Mammary epithelial cell (primary cell): ENCODE measurements at regions of chr20 and their contacts with region 1.

Region 1: DNA sequence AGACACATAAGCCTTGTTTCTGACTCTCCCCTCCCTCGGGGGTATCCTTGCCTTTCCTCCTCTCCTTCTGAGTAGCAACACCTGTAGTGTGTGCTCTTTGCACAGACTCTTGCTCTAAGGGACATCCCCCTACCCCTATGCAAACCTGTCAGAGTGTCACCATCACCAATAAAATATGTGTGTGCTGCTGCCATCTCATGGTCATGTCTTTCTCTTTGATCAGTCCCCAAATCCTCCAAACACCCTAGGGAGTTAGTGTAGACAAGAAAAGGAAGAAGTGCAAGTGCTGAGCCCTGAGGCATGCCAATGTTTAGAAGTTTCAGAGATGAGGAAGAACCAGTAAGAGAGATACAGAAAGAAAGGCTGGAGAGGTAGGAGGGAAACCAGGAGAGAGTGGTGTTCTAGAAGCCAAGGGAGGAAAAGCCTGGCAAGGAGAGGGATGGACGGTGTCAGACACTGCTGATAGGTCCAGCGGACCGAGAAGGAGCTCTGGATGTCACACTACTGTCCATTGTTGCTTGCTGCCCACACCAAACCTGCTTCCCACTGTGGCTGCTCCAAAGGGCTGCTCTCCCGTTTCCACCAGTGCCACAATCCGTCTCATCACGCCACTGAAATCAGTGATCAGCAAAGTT is 16.4 kb downstream of the TRMT6 start:
- DNase-seq: no peak
- H3K4me3 ChIP-seq: no peak overlapping the region
- H3K27ac ChIP-seq: no peak overlapping the region
- H3K4me1 ChIP-seq: no peaks in the 10 kb centered on the region
- H3K27me3 ChIP-seq: no peaks in the 10 kb centered on the region
- CTCF ChIP-seq: peak; percentile 28 to 56

Region 2: GRCh38 chr20:5806457-5807263 is 127.3 kb before region 1 on chr20:
- CTCF ChIA-PET with region 1: no interaction called
- dilution Hi-C with region 1: no loop called
- in situ Hi-C with region 1: loop called in 1 of 2 experiments (anchors 25 kb)
- intact Hi-C with region 1: loop called (anchors 1 kb)
- DNase-seq: no peak
- H3K4me3 ChIP-seq: no peak overlapping the region
- H3K27ac ChIP-seq: no peak overlapping the region
- H3K4me1 ChIP-seq: no peaks in the 10 kb centered on the region
- H3K27me3 ChIP-seq: no peaks in the 10 kb centered on the region
- CTCF ChIP-seq: peak; percentile 18 to 44

Region 3: DNA sequence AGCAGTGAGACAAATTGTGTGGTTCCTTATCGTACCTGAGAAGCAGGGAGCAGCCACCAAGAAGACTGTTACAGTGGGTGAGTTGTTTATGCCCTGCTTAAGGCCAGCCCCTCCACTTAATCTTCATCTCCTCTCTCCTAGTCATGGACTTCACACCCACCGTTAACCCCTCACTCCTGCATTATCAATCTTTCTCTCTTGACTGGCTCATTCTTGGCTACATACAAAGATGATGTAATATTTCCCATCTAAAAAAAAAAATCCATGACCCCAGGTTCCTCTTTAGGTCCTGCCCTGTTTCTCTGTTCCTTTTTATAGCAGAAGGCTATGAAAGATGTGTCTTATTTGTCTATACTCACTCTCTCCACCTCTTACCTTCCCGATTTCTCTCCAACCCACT is 111.3 kb before region 1 on chr20:
- CTCF ChIA-PET with region 1: no interaction called
- dilution Hi-C with region 1: loop called (anchors 5 kb)
- in situ Hi-C with region 1: loop called in 1 of 2 experiments (anchors 25 kb)
- intact Hi-C with region 1: no loop called
- DNase-seq: no peak
- H3K4me3 ChIP-seq: no peak overlapping the region
- H3K27ac ChIP-seq: no peak overlapping the region
- H3K4me1 ChIP-seq: peaks cover 5% of the 10 kb centered on the region
- H3K27me3 ChIP-seq: no peaks in the 10 kb centered on the region
- CTCF ChIP-seq: no peak